GM13977 (cell line): ENCODE measurements at regions of chr4 and their contacts with region 1.

Region 1: GRCh38 chr4:112327965-112328733 is 31.0 kb downstream of the ALPK1 start:
- DNase-seq: peak; percentile 40
- CTCF ChIP-seq: peak; percentile 53

Region 2: DNA sequence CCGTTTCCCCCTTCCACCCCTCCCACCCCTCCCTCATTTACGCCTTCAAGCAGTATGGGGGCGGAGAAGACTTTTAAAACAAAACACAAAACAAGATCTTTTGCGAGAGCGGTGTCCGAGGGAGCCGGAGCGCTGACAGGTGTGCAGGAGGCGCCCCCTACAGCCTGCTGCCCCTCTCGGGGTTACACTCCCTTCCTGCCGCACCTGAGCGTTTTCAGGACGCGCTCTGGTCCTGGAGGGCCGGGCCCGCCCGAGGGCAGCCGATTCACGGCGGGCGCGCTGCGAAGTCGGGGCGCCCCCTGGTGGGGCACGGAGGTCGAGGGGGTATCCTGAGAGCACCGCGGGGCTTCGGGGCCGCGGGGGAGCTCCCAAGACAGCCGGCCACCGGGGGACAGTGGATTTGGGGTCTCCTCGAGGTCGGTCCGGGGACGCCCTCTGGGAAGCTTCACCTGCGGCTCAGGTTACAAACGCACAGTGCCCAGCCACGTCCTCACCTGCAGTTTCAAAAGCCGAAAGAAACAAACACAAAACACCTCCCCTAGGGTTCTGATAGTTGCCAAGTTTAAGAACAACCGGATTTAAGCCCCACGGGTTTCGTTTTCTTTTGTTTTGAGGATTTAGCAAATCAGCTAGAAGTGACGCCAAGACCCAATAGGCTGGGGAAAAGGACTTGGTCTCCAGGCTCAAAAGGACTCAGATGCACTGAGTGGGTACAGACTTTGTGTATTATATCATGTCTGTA is 195.8 kb after region 1 on chr4:
- in situ Hi-C with region 1: loop called (anchors 10 kb)
- DNase-seq: peak; percentile 88
- CTCF ChIP-seq: peak; percentile 94

Region 3: DNA sequence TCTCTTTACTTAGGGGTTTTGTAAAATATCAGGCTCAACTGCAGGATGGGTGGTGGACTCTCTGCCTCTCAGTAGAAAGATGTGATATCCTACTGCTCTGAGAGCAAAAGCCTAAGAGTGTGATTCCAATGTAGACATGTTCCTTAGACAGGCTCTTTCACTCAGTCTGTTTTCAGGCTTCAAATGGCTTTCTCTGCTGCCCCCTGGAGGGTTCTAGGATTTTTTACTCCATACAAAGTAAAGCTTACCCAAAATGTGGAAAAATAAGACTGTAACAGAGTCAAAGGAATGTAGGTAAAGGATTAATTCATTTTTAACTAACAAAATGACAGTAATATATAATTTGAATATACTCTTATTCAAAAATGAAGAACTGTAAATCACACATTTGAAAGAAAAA is 276.4 kb after region 1 on chr4:
- in situ Hi-C with region 1: loop called (anchors 25 kb)
- DNase-seq: peak; percentile 48
- CTCF ChIP-seq: peak; percentile 54

Region 4: GRCh38 chr4:112765317-112765975 is 437.3 kb after region 1 on chr4:
- in situ Hi-C with region 1: loop called (anchors 25 kb)
- DNase-seq: peak; percentile 60
- CTCF ChIP-seq: peak; percentile 59